AG04449 (cell line): ENCODE measurements at regions of chr12 and their contacts with region 1.

Region 1: GRCh38 chr12:70719672-70720420 is 82.6 kb upstream of the PTPRB start:
- DNase-seq: peak; percentile 7
- H3K4me3 ChIP-seq: peak overlapping the region; percentile 58
- CTCF ChIP-seq: peak; percentile 85

Region 2: GRCh38 chr12:69879041-69879960 is 840.5 kb before region 1 on chr12:
- CTCF ChIA-PET with region 1: interaction called, 40 read pairs
- POLR2A ChIA-PET with region 1: no interaction called
- DNase-seq: no peak
- H3K4me3 ChIP-seq: peak overlapping the region; percentile 42
- CTCF ChIP-seq: peak; percentile 80

Region 3: DNA sequence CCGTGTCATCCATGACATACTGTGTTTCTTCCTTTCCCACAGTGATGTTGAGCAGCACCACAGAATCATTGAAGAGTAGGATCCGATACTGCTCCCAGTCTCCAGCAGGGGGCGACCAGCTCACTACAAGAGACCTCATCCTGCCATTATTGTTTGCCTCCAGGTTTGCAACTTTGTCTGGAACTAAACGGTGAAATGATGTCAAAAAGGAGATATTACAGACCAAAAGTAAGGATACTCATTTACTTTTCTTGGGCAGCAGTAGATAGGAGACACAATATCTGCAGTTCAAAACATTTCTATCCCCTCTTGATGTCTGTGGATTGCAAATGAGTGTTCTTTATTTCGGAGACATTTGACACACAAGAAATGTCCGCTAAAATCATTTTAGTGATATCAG is 129.8 kb before region 1 on chr12:
- CTCF ChIA-PET with region 1: interaction called, 199 read pairs
- POLR2A ChIA-PET with region 1: no interaction called
- DNase-seq: peak; percentile 28
- H3K4me3 ChIP-seq: no peak overlapping the region
- CTCF ChIP-seq: peak; percentile 80

Region 4: GRCh38 chr12:70831538-70831937 is 111.7 kb after region 1 on chr12:
- CTCF ChIA-PET with region 1: no interaction called
- POLR2A ChIA-PET with region 1: no interaction called
- DNase-seq: no peak
- H3K4me3 ChIP-seq: no peak overlapping the region
- CTCF ChIP-seq: no peak